ENCODE measurements at regions of chr17 and their contacts with region 1.

Region 1: DNA sequence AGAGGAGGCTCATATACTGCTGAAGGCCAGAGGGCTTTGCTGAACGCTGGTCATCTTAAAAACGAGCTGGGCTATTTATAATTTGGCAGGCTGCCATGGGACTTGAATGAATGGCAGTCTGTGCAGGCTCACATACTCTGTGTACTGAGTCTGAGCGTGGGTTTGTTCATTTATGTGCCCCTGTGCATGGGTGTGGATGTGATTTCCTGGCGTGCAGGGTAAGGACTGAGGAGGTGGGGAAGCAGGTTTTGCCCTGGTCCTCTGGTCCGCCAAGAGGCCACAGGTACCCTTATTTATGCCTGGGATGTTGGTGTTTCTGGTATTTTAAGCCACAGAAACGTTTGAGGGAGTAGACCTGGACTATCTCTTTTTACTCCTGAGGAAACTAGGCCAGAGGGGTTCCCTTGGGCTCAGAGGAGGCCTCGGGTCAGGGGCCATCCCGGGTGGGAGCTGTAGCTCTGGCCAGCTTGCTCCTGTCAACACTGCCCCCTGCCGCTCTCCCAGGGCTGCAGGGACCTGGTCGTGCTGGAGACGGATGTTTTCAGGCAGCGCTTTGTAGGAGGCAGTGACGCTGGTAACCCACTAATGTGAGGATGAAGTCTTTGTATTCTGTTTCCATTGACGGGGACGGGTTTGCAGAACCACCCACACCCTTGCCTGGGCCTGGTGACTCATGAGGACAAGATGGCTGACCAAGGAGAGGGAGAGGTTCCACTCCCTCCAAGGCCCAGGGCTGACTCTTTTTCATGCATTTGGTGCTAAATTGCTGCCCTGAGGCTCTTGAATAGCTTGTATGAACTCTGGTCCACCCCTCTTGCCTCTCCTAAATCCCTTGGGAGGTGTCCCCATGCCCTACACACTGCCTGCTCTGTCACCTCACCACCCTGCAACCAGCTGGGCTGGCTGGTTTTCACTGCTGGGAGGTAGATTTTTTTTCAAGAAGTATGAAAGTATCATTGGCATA is 184.5 kb downstream of the MSI2 start:
- DNase-seq: peak; percentile 6 to 62
- H3K4me3 ChIP-seq: no peak overlapping the region
- H3K27ac ChIP-seq: no peak overlapping the region
- H3K4me1 ChIP-seq: no peaks in the 10 kb centered on the region; the same call in 1 of the 2 replicates
- H3K27me3 ChIP-seq: peaks cover 23% of the 10 kb centered on the region; the same call in 1 of the 2 replicates
- CTCF ChIP-seq: no peak; the same call in 1 of the 2 replicates

Region 2: GRCh38 chr17:57370037-57370581 is 70.7 kb before region 1 on chr17:
- CTCF ChIA-PET with region 1: no interaction called
- POLR2A ChIA-PET with region 1: no interaction called
- intact Hi-C with region 1: no loop called
- DNase-seq: peak in 1 of 2 experiments; percentile 88
- H3K4me3 ChIP-seq: 0 out of 2 replicates have a peak overlapping the region, but pooled peaks have one; percentile 13
- H3K27ac ChIP-seq: peak overlapping the region; percentile 69
- H3K4me1 ChIP-seq: peaks cover 59% of the 10 kb centered on the region
- H3K27me3 ChIP-seq: peaks cover 4% of the 10 kb centered on the region; the same call in 1 of the 2 replicates
- CTCF ChIP-seq: no peak

Region 3: DNA sequence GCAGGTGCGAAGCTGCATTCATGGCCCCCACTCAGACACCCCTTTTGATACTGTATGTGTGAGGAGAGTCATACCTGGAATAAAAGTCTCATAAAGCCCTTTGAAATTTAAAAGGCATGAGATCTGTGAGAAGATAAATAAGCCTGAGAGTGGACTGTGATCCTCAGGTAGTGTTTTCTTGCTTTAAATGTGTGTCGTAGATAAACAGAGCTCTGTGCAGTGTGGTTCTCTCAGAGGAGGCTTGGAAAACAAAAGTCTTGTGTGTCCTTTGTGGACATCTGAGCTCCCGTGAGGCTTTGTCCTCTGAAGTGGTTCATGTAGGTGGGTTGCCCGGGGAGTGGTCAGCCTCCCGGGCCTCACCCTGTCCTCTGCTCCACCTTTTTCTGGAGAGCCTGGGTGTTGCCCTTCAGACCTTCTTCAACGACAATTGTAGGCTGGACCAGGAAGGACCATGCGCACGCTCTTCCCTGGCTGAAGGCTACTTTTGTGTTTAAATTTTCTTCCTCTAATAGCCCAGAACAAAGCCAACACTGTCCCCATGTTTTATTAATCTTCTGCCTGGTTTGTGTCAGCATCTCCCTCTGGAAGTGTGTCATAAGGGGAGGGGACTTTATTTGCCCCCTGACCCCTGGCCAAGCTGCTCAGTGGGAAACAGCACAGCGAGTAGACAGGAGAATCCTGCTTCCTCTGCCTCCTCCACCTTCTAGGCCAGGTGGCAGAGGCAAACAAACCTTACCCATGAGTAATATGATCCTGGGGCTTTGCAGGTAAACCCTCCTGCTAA is 33.3 kb before region 1 on chr17:
- CTCF ChIA-PET with region 1: no interaction called
- POLR2A ChIA-PET with region 1: interaction called, 11 read pairs
- intact Hi-C with region 1: no loop called
- DNase-seq: peak; percentile 37 to 94
- H3K4me3 ChIP-seq: peak overlapping the region; percentile 43; the same call in 1 of the 2 replicates
- H3K27ac ChIP-seq: peak overlapping the region; percentile 79
- H3K4me1 ChIP-seq: peaks cover 33% of the 10 kb centered on the region
- H3K27me3 ChIP-seq: 0 out of 2 replicates have a peak, but pooled peaks cover 13% of the 10 kb centered on the region
- CTCF ChIP-seq: no peak

Measured in PC-9 (cell line).